ENCODE measurements at regions of chr1 and their contacts with region 1.

Region 1: DNA sequence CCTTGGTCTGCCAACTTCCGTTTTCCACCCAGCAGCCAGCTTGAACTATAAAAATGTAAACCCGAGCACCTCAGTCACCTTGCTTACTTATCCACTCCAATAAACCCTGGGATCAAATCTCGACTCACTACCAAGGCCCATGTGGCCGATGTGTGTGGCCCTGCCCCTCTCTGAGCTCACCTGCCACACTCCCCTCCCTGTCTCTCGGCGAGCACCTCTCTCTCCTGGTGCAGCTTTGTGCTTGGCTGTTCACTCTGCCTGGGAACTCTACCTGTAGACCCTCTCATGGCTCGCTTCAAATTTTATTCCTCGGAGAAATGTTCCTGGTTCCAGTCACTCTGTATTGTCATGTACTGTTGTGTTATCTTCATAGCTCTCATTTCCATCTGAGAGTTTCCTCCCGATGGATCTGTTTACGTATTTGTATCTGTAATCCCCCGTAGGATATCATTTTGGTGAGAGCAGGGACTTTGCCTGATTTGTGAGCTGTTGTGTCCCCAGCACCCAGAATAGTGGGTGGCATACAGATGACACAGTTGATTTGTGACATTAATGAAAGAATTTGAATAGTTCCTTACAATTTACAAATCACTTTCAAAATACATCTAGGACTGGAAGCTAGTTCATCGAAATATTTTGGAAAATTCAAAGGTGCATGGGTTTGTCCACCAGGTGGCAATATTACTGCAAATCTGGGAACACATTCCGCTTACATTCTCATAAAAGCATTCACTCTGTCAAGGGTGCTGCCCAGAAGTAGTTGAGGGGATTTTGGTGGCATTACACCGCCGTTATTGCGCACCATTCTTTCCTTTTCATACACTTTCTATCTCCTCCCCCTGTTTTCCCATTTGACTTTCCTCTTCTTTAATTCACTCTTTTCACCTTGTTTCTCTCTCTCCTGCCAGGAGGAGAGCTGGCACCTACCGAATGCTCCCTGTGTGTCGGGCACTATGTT is 95.3 kb downstream of the ABCA4 start:
- DNase-seq: no peak
- H3K4me3 ChIP-seq: no peak overlapping the region
- H3K27ac ChIP-seq: no peak overlapping the region
- H3K27me3 ChIP-seq: peaks cover under 1% of the 10 kb centered on the region
- CTCF ChIP-seq: peak; percentile 76

Region 2: DNA sequence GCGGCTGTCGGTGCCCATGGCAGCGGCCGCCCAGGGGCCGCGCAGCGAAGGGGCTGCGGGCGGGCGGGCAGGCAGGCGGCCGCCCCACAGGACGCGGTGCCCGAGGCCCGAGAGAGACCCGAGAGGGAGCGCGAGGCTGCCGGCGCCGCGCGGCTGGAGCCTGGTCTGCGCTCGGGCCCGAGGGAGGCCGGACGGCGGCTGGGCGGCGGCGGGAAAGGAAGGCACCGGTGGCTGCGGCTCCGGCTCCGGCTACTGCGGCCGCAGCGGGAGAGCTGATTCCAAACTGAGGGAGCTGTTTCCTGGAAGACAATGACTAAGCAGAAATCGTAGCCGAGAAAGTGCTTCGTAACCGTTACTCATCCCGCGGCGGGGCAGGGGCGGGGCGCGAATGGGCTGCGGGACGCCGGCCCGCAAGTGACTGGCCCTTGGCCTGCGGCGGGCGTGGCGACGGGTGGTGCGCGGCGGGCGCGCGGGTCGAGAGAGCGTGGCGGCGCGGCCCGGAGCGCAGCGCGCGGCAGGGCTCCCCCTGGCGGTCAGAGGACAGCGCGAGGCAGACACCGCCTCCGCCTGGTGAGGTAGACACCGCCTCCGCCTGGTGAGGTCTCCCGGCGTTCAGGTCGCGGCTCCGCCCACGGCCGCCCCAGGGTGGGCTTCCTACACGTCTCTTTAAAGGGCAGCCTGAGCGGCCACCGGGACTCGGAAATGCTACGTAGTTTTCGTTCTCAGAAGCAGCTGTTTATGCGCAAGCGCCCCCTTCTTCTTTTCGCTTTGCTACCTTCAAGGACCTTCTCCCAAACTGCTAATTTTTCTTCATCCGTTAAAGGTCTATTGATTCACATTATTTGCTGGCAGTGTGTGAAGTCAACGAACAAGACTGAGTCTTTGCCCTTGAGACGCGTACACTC is 116.3 kb before region 1 on chr1 and contains the start of gene GCLM:
- CTCF ChIA-PET with region 1: interaction called, 16 read pairs
- POLR2A ChIA-PET with region 1: interaction called, 7 read pairs
- DNase-seq: peak; percentile 86
- H3K4me3 ChIP-seq: peak within 1 kb of the TSS; percentile 95
- H3K27ac ChIP-seq: peak within 1 kb of the TSS; percentile 33
- H3K27me3 ChIP-seq: peaks cover 2% of the 10 kb centered on the region
- CTCF ChIP-seq: peak; percentile 78
- polyA plus RNA-seq, gene GCLM: 45.1 and 58.6 TPM in 2 replicates

Region 3: GRCh38 chr1:93988634-93989350 is 36.9 kb before region 1 on chr1:
- CTCF ChIA-PET with region 1: interaction called, 7 read pairs
- POLR2A ChIA-PET with region 1: interaction called, 31 read pairs
- DNase-seq: peak; percentile 72
- H3K4me3 ChIP-seq: no peak overlapping the region
- H3K27ac ChIP-seq: peak overlapping the region; percentile 90
- H3K27me3 ChIP-seq: peaks cover 4% of the 10 kb centered on the region
- CTCF ChIP-seq: no peak

Region 4: GRCh38 chr1:94000510-94001282 is 25.0 kb before region 1 on chr1:
- CTCF ChIA-PET with region 1: no interaction called
- POLR2A ChIA-PET with region 1: no interaction called
- DNase-seq: no peak
- H3K4me3 ChIP-seq: no peak overlapping the region
- H3K27ac ChIP-seq: no peak overlapping the region
- H3K27me3 ChIP-seq: peaks cover 6% of the 10 kb centered on the region
- CTCF ChIP-seq: no peak

Region 5: GRCh38 chr1:94039514-94039870 is 13.8 kb after region 1 on chr1:
- CTCF ChIA-PET with region 1: interaction called, 211 read pairs
- POLR2A ChIA-PET with region 1: interaction called, 19 read pairs
- DNase-seq: no peak
- H3K4me3 ChIP-seq: no peak overlapping the region
- H3K27ac ChIP-seq: no peak overlapping the region
- H3K27me3 ChIP-seq: no peaks in the 10 kb centered on the region
- CTCF ChIP-seq: peak; percentile 83

Region 6: GRCh38 chr1:94061513-94062443 is 36.1 kb after region 1 on chr1:
- CTCF ChIA-PET with region 1: interaction called, 25 read pairs
- POLR2A ChIA-PET with region 1: interaction called, 3 read pairs
- DNase-seq: peak; percentile 57
- H3K4me3 ChIP-seq: no peak overlapping the region
- H3K27ac ChIP-seq: peak overlapping the region; percentile 33
- H3K27me3 ChIP-seq: no peaks in the 10 kb centered on the region
- CTCF ChIP-seq: peak; percentile 97

Region 7: DNA sequence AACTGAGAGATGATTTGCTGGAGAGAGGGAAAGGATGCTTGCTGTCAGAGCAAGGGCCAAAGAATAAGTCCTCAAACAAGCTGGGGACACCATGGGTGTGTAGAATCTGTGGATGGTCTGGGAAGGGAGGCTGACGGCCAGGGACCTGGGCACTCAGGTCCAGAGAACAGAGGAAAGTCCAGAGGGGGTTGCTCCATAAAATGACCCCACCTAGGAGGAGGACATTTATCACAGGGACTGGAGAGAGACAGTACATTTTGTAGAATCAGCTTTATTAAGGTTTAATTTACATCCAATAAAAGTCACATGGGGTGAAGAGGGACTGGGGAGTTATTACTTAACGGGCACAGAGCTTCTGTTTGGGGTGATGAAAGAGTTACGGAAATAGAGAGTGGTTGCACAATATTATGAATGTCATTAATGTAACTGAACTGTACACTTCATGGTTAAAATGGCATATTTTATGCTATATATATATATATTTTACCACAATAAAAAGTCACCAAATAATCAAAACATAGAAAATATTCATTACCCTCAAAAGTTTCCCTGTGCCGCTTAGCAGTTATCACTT is 319.6 kb after region 1 on chr1:
- CTCF ChIA-PET with region 1: interaction called, 472 read pairs
- POLR2A ChIA-PET with region 1: no interaction called
- DNase-seq: no peak
- H3K4me3 ChIP-seq: no peak overlapping the region
- H3K27ac ChIP-seq: no peak overlapping the region
- H3K27me3 ChIP-seq: peaks cover 24% of the 10 kb centered on the region
- CTCF ChIP-seq: no peak